CD4-positive, alpha-beta memory T cell (primary cell): ENCODE measurements at regions of chr6 and their contacts with region 1.

Region 1: GRCh38 chr6:27753668-27754407 is 158.4 kb downstream of the OR2B2 start:
- DNase-seq: peak; percentile 27 to 66 (median 44)
- H3K4me3 ChIP-seq: peak overlapping the region; percentile 50 to 63
- H3K4me3 Mint-ChIP-seq: peak overlapping the region; percentile 85 to 99 (median 93)
- H3K27ac ChIP-seq: no peak overlapping the region
- H3K27ac Mint-ChIP-seq: peak overlapping the region; percentile 16 to 100 (median 99)
- H3K4me1 ChIP-seq: peaks cover 20% of the 10 kb centered on the region
- H3K4me1 Mint-ChIP-seq: peaks cover 15 to 47% (median 26%) of the 10 kb centered on the region in 4 donors
- H3K27me3 ChIP-seq: no peaks in the 10 kb centered on the region
- H3K27me3 Mint-ChIP-seq: peaks cover 0 to 5% of the 10 kb centered on the region in 2 donors

Region 2: GRCh38 chr6:27157459-27158315 is 596.2 kb before region 1 on chr6:
- CTCF ChIA-PET with region 1: interaction called, 6 read pairs
- POLR2A ChIA-PET with region 1: no interaction called
- intact Hi-C with region 1: loop called (anchors 1 kb)
- DNase-seq: peak; percentile 78 to 92 (median 82)
- H3K4me3 ChIP-seq: peak overlapping the region; percentile 18 to 44
- H3K4me3 Mint-ChIP-seq: peak overlapping the region; percentile 81 to 91 (median 84)
- H3K27ac ChIP-seq: no peak overlapping the region
- H3K27ac Mint-ChIP-seq: peak overlapping the region; percentile 68 to 95 (median 85)
- H3K4me1 ChIP-seq: peaks cover 30% of the 10 kb centered on the region
- H3K4me1 Mint-ChIP-seq: peaks cover 21 to 46% (median 38%) of the 10 kb centered on the region in 4 donors
- H3K27me3 ChIP-seq: no peaks in the 10 kb centered on the region
- H3K27me3 Mint-ChIP-seq: peaks cover 0 to 4% of the 10 kb centered on the region in 2 donors

Region 3: DNA sequence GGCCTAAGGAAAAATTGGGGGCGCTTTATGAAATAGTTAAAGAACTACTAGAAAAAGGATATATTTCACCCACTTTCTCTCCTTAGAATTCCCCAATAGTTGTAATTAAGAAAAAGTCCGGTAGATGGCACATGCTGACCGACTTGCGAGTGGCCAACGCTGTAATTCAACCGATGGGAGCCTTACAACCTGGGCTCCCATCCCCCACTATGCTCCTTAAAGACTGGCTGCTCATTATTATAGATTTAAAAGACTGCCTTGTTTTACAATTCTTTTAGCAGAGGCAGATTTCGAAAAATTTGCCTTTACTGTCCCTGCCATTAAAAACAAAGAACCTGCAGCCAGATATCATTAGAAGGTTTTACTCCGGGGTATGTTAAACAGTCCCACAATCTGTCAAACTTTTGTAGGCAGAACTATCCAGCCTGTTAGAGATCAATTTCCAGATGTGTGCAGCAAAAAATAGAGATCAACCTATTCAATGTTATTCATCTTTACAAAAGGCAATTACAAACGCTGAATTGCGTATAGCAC is 564.9 kb before region 1 on chr6:
- CTCF ChIA-PET with region 1: interaction called, 5 read pairs
- POLR2A ChIA-PET with region 1: interaction called, 3 read pairs
- intact Hi-C with region 1: loop called (anchors 1 kb)
- DNase-seq: peak; percentile 55 to 69 (median 67)
- H3K4me3 ChIP-seq: peak overlapping the region; percentile 58 to 73
- H3K4me3 Mint-ChIP-seq: peak overlapping the region; percentile 79 to 96 (median 93)
- H3K27ac ChIP-seq: peak overlapping the region; percentile 44
- H3K27ac Mint-ChIP-seq: peak overlapping the region; percentile 49 to 86 (median 73)
- H3K4me1 ChIP-seq: peaks cover 9% of the 10 kb centered on the region
- H3K4me1 Mint-ChIP-seq: peaks cover 2 to 20% (median 15%) of the 10 kb centered on the region in 4 donors
- H3K27me3 ChIP-seq: no peaks in the 10 kb centered on the region
- H3K27me3 Mint-ChIP-seq: no peaks in the 10 kb centered on the region

Region 4: DNA sequence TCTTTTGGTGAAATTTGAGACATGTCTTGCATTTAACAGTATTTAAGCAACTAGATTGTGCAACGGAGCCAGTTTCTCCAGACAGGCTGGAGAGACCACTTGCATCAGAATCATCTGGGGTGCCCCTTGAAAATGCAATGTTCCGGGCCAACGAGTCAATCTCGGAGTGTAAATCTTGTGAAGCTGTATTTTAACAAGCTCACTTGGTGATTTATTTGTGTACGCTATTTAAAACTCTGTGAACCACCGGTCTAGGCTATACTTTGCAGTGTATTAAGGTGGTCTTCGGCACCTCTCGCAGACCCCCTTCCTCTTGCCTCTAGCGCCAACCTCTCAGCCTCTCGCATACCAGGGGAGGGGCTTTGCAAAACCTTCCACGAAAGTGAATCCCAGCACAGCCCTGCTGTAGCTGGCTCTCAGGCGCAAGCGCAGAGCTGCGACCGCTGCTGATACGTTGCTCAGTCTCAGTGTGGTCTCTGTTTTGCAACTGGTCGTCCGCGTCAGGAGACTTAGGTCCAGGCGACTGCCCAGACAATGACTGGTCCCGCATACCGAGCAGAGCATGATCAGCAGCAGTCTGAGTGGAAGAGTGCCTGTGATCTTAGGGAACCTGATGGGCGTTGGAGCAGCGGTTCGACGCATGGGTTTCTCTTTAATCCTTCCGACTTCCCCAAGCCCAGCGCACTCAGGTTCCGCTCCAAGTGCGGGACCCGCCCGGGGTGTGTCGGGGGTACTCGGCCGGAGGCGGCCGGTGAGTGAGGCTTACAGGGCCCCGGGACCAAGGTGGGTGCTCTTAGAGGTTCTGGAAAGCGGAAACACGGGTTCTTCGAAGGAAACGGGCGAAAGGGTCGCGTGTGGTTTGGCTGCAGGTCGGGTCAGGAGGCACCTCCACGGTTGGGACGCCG is 365.3 kb before region 1 on chr6 and contains the start of gene ZNF391:
- CTCF ChIA-PET with region 1: interaction called, 3 read pairs
- POLR2A ChIA-PET with region 1: no interaction called
- intact Hi-C with region 1: loop called (anchors 5 kb)
- DNase-seq: peak; percentile 50 to 71 (median 62)
- H3K4me3 ChIP-seq: peak within 1 kb of the TSS; percentile 62 to 95
- H3K4me3 Mint-ChIP-seq: peak within 1 kb of the TSS; percentile 94 to 99 (median 97)
- H3K27ac ChIP-seq: peak within 1 kb of the TSS; percentile 43
- H3K27ac Mint-ChIP-seq: peak within 1 kb of the TSS; percentile 74 to 95 (median 91)
- H3K4me1 ChIP-seq: peaks cover 14% of the 10 kb centered on the region
- H3K4me1 Mint-ChIP-seq: peaks cover 7 to 23% (median 16%) of the 10 kb centered on the region in 4 donors
- H3K27me3 ChIP-seq: no peaks in the 10 kb centered on the region
- H3K27me3 Mint-ChIP-seq: peaks cover 0 to 1% of the 10 kb centered on the region in 2 donors
- total RNA-seq, gene ZNF391: 3.3 to 3.7 TPM

Region 5: GRCh38 chr6:27503436-27504030 is 250.3 kb before region 1 on chr6:
- CTCF ChIA-PET with region 1: interaction called, 11 read pairs
- POLR2A ChIA-PET with region 1: interaction called, 4 read pairs
- intact Hi-C with region 1: no loop called
- DNase-seq: peak; percentile 79 to 82 (median 80)
- H3K4me3 ChIP-seq: peak overlapping the region; percentile 79
- H3K4me3 Mint-ChIP-seq: peak overlapping the region; percentile 87 to 94 (median 90)
- H3K27ac ChIP-seq: peak overlapping the region; percentile 9
- H3K27ac Mint-ChIP-seq: peak overlapping the region; percentile 78 to 99 (median 91)
- H3K4me1 ChIP-seq: peaks cover 36% of the 10 kb centered on the region
- H3K4me1 Mint-ChIP-seq: peaks cover 25 to 44% (median 33%) of the 10 kb centered on the region in 4 donors
- H3K27me3 ChIP-seq: peaks cover 4% of the 10 kb centered on the region
- H3K27me3 Mint-ChIP-seq: peaks cover 0 to 25% of the 10 kb centered on the region in 2 donors

Region 6: GRCh38 chr6:27617700-27618689 is 135.8 kb before region 1 on chr6:
- CTCF ChIA-PET with region 1: no interaction called
- POLR2A ChIA-PET with region 1: no interaction called
- intact Hi-C with region 1: no loop called
- DNase-seq: no peak
- H3K4me3 ChIP-seq: no peak overlapping the region
- H3K4me3 Mint-ChIP-seq: peak overlapping the region in 2 of 8 donors; percentile 30 to 32
- H3K27ac ChIP-seq: no peak overlapping the region
- H3K27ac Mint-ChIP-seq: no peak overlapping the region
- H3K4me1 ChIP-seq: peaks cover 6% of the 10 kb centered on the region
- H3K4me1 Mint-ChIP-seq: peaks cover 6 to 14% (median 11%) of the 10 kb centered on the region in 4 donors
- H3K27me3 ChIP-seq: peaks cover 7% of the 10 kb centered on the region
- H3K27me3 Mint-ChIP-seq: peaks cover 45 to 49% of the 10 kb centered on the region in 2 donors

Region 7: DNA sequence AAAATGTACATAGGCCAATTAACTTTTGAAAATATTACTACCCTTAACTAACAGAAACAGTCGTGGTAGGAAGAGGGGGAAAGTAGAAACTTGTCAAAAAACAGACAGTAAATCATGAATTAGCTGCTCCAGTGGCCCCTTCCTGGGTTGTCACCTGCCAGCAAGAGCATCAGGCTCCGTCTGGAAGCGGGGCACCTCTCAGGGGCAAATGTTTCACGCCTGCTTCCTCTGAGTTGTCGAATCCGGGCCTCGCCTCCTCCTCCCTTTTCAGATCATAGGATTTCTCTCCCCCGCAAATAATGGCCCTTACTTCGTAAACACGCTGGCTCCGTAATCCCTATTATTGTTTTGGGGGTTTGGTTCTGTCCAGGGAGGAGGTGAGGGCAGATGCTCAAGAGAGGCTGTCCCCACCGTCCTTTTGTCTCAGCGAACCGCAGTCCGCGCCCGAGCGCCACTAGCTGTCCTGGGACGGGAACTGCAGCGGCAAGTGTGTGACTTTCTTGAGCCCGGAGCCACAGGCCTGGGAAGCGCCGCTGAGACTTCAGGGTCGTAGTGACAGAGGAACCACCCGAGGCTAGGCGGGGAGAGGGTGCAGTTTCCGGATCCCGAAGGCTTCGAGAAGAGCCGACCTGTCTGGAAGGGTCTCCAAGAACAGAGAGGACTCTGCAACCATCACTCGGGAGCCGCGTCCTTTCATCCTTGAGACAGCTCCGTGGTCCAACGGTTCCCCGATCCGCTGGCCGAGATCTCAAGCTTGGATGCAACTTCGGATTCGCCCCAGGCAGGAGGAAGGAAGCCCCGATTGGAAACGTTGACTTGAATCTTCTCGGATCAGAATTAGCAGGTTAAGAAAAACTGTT is 66.5 kb before region 1 on chr6:
- CTCF ChIA-PET with region 1: interaction called, 16 read pairs
- POLR2A ChIA-PET with region 1: interaction called, 8 read pairs
- intact Hi-C with region 1: loop called (anchors 2 kb)
- DNase-seq: peak; percentile 66 to 81 (median 71)
- H3K4me3 ChIP-seq: peak overlapping the region; percentile 98
- H3K4me3 Mint-ChIP-seq: peak overlapping the region; percentile 86 to 96 (median 92)
- H3K27ac ChIP-seq: peak overlapping the region; percentile 65
- H3K27ac Mint-ChIP-seq: peak overlapping the region; percentile 76 to 100 (median 94)
- H3K4me1 ChIP-seq: peaks cover 16% of the 10 kb centered on the region
- H3K4me1 Mint-ChIP-seq: peaks cover 16 to 26% (median 20%) of the 10 kb centered on the region in 4 donors
- H3K27me3 ChIP-seq: peaks cover under 1% of the 10 kb centered on the region
- H3K27me3 Mint-ChIP-seq: peaks cover 6 to 14% of the 10 kb centered on the region in 2 donors

Region 8: DNA sequence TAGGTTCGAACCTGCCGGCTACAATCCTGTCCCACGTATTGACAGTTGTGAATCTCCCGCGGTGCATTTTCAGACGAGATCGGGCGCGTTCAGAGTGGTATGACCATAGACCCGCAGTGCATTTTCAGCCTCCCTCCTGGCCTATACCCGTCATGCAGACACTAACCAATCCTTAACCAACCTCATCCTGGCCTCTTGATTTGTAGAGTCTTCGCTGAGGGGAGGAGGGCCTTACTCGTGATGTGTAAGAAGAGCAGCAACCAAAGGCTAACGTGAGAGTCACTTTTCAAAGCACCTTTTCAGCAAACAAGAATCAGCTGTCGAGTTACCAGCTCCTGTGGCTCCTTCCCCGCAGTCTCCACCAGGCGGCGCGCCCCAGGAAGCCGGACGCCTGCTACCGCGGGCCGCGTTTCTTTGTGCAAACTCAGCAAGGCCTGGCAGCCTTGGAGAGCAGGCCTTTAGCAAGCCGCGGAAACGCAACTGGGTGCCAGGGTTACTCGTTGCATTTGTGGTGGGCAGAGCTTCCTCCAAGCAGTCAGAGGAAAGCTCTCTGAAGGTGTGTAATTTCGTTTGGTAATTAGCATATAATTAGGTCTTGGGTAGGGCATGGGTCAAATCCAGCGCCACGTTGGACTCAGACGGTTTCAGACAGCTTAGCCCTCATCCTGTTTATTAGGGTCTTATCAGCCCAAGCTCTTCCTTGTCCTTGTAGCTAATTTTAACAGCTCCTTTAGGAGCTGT is 18.6 kb after region 1 on chr6:
- CTCF ChIA-PET with region 1: interaction called, 70 read pairs
- POLR2A ChIA-PET with region 1: interaction called, 6 read pairs
- intact Hi-C with region 1: loop called (anchors 2 kb)
- DNase-seq: peak; percentile 82 to 85 (median 84)
- H3K4me3 ChIP-seq: no peak overlapping the region
- H3K4me3 Mint-ChIP-seq: peak overlapping the region in 5 of 8 donors; percentile 0 to 60 (median 51)
- H3K27ac ChIP-seq: no peak overlapping the region
- H3K27ac Mint-ChIP-seq: peak overlapping the region in 5 of 7 donors; percentile 4 to 80 (median 15)
- H3K4me1 ChIP-seq: peaks cover 11% of the 10 kb centered on the region
- H3K4me1 Mint-ChIP-seq: peaks cover 3 to 17% (median 9%) of the 10 kb centered on the region in 4 donors
- H3K27me3 ChIP-seq: peaks cover 5% of the 10 kb centered on the region
- H3K27me3 Mint-ChIP-seq: peaks cover 7 to 26% of the 10 kb centered on the region in 2 donors

Region 9: DNA sequence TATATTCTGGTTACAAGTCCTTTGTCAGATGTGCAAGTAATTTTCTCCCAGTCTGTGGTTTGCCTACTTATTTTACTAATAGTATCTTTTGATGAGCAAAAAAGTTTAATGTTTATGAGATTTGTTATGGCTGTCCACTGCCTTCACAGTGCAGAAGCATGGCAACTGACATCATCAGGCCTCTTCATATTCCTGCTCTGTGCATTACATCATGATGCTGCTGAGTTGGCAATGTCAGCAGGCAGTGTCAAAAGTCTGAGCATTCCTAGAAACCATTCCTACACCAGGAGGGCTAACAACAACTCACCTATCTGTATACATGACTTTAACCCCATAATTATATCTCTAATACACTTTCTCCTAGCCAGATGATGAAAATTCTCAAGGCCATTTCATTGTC is 169.1 kb after region 1 on chr6:
- CTCF ChIA-PET with region 1: no interaction called
- POLR2A ChIA-PET with region 1: no interaction called
- intact Hi-C with region 1: no loop called
- DNase-seq: no peak
- H3K4me3 ChIP-seq: no peak overlapping the region
- H3K4me3 Mint-ChIP-seq: no peak overlapping the region
- H3K27ac ChIP-seq: no peak overlapping the region
- H3K27ac Mint-ChIP-seq: no peak overlapping the region
- H3K4me1 ChIP-seq: no peaks in the 10 kb centered on the region
- H3K4me1 Mint-ChIP-seq: no peaks in the 10 kb centered on the region
- H3K27me3 ChIP-seq: no peaks in the 10 kb centered on the region
- H3K27me3 Mint-ChIP-seq: peaks cover 18 to 20% of the 10 kb centered on the region in 2 donors

Region 10: DNA sequence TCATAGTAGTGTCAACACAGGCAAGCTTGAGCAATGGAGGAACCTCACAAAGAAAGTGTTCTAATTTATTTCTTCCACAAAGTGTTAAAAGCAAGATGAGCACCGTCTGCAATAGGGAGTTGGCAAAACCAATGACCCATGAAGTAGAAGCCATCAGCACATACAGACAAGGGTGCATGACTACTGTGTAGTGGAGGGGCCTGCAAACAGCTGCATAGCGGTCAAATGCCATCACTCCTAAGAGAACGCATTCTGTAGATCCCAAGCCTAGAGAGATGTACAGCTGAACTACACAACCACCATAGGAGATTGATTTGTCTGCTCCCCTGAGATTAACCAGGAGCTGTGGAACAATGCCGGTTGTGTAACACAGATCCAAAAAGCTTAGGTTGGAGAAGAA is 299.7 kb after region 1 on chr6:
- CTCF ChIA-PET with region 1: no interaction called
- POLR2A ChIA-PET with region 1: no interaction called
- intact Hi-C with region 1: no loop called
- DNase-seq: no peak
- H3K4me3 ChIP-seq: no peak overlapping the region
- H3K4me3 Mint-ChIP-seq: no peak overlapping the region
- H3K27ac ChIP-seq: no peak overlapping the region
- H3K27ac Mint-ChIP-seq: no peak overlapping the region
- H3K4me1 ChIP-seq: no peaks in the 10 kb centered on the region
- H3K4me1 Mint-ChIP-seq: no peaks in the 10 kb centered on the region
- H3K27me3 ChIP-seq: no peaks in the 10 kb centered on the region
- H3K27me3 Mint-ChIP-seq: peaks cover 31 to 37% of the 10 kb centered on the region in 2 donors